PC-9 (cell line): ENCODE measurements at regions of chr2 and their contacts with region 1.

Region 1: GRCh38 chr2:144552821-144553220 is 32.9 kb upstream of the ZEB2 start:
- DNase-seq: no peak
- H3K4me3 ChIP-seq: no peak overlapping the region
- H3K27ac ChIP-seq: no peak overlapping the region
- H3K4me1 ChIP-seq: 0 out of 2 replicates have a peak, but pooled peaks cover 3% of the 10 kb centered on the region
- H3K27me3 ChIP-seq: no peaks in the 10 kb centered on the region
- CTCF ChIP-seq: no peak

Region 2: DNA sequence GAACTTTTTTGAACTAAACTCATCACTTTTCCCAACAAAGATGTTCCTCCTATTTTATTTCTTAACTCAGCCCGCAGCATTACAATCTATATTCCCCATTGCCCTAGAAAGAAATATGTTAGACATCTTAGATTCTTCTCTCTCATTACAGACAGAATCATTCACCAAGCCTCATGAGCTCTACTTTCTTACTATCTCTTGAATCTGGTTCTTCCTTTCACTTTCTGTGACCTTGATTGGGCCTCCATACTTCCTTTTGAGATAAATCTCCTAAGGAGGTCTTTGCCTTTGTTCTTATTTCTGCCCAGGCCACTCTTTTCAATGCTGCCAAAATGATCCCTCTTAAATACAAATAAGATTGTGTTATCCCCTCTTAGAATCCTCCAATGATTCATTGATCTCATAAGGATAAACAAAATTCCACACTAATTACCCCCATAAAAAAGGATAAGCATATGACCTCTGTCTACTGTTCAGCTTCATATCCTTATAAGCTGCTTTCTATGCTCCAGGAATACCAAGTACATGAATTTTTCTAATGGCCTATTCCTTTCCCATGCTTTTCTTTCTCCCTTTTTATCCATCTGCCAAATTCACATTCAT is 1023.6 kb before region 1 on chr2:
- CTCF ChIA-PET with region 1: no interaction called
- POLR2A ChIA-PET with region 1: interaction called, 19 read pairs
- intact Hi-C with region 1: no loop called
- DNase-seq: no peak
- H3K4me3 ChIP-seq: no peak overlapping the region
- H3K27ac ChIP-seq: no peak overlapping the region
- H3K4me1 ChIP-seq: no peaks in the 10 kb centered on the region
- H3K27me3 ChIP-seq: no peaks in the 10 kb centered on the region
- CTCF ChIP-seq: no peak